OCI-LY7 (cell line): ENCODE measurements at regions of chr1 and their contacts with region 1.

Region 1: DNA sequence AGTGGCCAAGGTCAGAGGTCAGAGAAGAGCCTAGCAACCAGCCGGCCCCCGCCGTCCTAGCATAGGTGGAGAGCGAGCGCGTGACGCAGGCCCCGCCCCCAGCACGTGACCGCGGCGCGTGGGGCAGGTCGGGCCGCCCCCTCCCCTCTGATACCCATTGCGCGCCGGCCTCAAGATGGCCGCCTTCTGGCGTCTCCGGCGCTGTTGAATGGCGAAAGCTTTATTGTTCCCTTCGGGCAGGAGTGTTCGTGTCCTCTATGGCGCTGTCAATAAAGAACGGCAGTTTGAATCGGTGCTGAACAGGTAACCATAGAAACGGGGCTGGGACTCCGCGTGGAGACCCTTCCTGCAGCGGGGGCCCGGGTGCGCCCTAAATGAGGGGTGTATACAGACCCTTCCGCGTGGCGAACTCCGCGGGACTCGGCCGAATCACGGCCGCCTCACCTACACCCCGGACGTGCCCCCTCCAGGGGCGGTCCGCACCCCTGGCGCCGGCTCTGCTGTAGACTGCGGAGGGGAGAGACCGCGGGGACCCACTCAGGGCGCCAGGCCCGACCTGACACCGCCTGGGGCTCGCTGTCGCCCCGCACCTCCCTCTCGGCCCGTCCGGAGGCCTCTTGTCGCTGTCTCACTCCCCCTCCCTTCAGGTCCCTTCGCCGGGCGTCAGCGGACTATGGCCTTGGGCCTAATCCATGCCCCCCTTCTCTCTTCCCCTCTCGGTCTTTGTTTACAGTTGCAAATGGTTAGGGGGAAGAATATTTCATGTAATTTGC is at the start of gene ZBTB40:
- DNase-seq: peak; percentile 96
- H3K4me3 ChIP-seq: peak within 1 kb of the TSS; percentile 83
- H3K27ac ChIP-seq: peak within 1 kb of the TSS; percentile 55
- H3K4me1 ChIP-seq: peaks cover 10% of the 10 kb centered on the region
- CTCF ChIP-seq: no peak
- total RNA-seq, gene ZBTB40: 15.6 and 16.6 TPM in 2 replicates

Region 2: GRCh38 chr1:22416555-22417454 is 35.1 kb before region 1 on chr1:
- CTCF ChIA-PET with region 1: no interaction called
- POLR2A ChIA-PET with region 1: no interaction called
- intact Hi-C with region 1: no loop called
- DNase-seq: peak; percentile 72
- H3K4me3 ChIP-seq: no peak overlapping the region
- H3K27ac ChIP-seq: no peak overlapping the region
- H3K4me1 ChIP-seq: peaks cover 17% of the 10 kb centered on the region
- CTCF ChIP-seq: peak; percentile 95

Region 3: GRCh38 chr1:22431965-22432364 is 19.9 kb before region 1 on chr1:
- CTCF ChIA-PET with region 1: no interaction called
- POLR2A ChIA-PET with region 1: interaction called, 5 read pairs
- intact Hi-C with region 1: loop called (anchors 2 kb)
- DNase-seq: peak; percentile 11
- H3K4me3 ChIP-seq: peak overlapping the region; percentile 20
- H3K27ac ChIP-seq: no peak overlapping the region
- H3K4me1 ChIP-seq: peaks cover 22% of the 10 kb centered on the region
- CTCF ChIP-seq: no peak

Region 4: DNA sequence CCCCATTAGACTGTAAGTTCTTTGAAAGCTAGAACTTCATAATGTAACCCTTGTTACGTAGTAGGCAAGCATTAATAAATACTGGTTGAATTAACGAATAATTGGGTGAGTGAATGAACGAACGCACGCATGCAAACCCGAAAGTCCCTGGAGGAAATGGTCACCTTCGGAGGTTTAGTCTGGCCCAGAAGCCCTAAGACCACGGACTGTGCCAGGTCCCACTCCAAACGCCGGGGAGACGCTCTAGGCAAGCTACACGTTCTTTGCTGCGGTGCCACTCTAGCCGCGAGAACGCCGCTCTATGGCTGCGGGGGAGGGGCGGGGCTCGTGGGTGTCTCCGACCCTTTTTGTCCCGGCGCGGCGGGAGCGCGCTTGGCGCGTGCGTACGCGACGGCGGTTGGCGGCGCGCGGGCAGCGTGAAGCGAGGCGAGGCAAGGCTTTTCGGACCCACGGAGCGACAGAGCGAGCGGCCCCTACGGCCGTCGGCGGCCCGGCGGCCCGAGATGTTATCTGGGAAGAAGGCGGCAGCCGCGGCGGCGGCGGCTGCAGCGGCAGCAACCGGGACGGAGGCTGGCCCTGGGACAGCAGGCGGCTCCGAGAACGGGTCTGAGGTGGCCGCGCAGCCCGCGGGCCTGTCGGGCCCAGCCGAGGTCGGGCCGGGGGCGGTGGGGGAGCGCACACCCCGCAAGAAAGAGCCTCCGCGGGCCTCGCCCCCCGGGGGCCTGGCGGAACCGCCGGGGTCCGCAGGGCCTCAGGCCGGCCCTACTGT is 567.4 kb after region 1 on chr1 and contains the start of gene KDM1A:
- CTCF ChIA-PET with region 1: no interaction called
- POLR2A ChIA-PET with region 1: no interaction called
- intact Hi-C with region 1: loop called (anchors 10 kb)
- DNase-seq: peak; percentile 99
- H3K4me3 ChIP-seq: peak within 1 kb of the TSS; percentile 91
- H3K27ac ChIP-seq: peak within 1 kb of the TSS; percentile 76
- H3K4me1 ChIP-seq: peaks cover 7% of the 10 kb centered on the region
- CTCF ChIP-seq: peak; percentile 41; the same call in 1 of the 2 replicates
- total RNA-seq, gene KDM1A: 95.5 and 107 TPM in 2 replicates